A673 (cell line): ENCODE measurements at regions of chr1 and their contacts with region 1.

Region 1: GRCh38 chr1:94329986-94330385 is 88.2 kb upstream of the ABCD3 start:
- DNase-seq: peak; percentile 61
- H3K4me3 ChIP-seq: no peak overlapping the region
- H3K27ac ChIP-seq: no peak overlapping the region
- H3K4me1 ChIP-seq: peaks cover 20% of the 10 kb centered on the region
- H3K27me3 ChIP-seq: no peaks in the 10 kb centered on the region
- CTCF ChIP-seq: peak; percentile 58

Region 2: GRCh38 chr1:94247138-94248094 is 82.6 kb before region 1 on chr1:
- CTCF ChIA-PET with region 1: no interaction called
- POLR2A ChIA-PET with region 1: no interaction called
- intact Hi-C with region 1: loop called (anchors 10 kb)
- DNase-seq: peak; percentile 14
- H3K4me3 ChIP-seq: peak overlapping the region; percentile 55
- H3K27ac ChIP-seq: no peak overlapping the region
- H3K4me1 ChIP-seq: no peaks in the 10 kb centered on the region
- H3K27me3 ChIP-seq: peaks cover 83% of the 10 kb centered on the region
- CTCF ChIP-seq: no peak